Endothelial cell of umbilical vein (primary cell): ENCODE measurements at regions of chr3 and their contacts with region 1.

Region 1: GRCh38 chr3:147030274-147030673 is 376.1 kb downstream of the ZIC4 start:
- DNase-seq: no peak
- H3K4me3 ChIP-seq: no peak overlapping the region
- H3K27ac ChIP-seq: no peak overlapping the region
- H3K4me1 ChIP-seq: no peaks in the 10 kb centered on the region
- H3K27me3 ChIP-seq: no peaks in the 10 kb centered on the region
- CTCF ChIP-seq: no peak
- POLR2A ChIP-seq: no peak

Region 2: GRCh38 chr3:147327849-147328248 is 297.6 kb after region 1 on chr3:
- CTCF ChIA-PET with region 1: no interaction called
- POLR2A ChIA-PET with region 1: interaction called, 15 read pairs
- dilution Hi-C with region 1: no loop called
- intact Hi-C with region 1: no loop called
- DNase-seq: no peak
- H3K4me3 ChIP-seq: no peak overlapping the region
- H3K27ac ChIP-seq: no peak overlapping the region
- H3K4me1 ChIP-seq: peaks cover 8% of the 10 kb centered on the region
- H3K27me3 ChIP-seq: no peaks in the 10 kb centered on the region
- CTCF ChIP-seq: no peak
- POLR2A ChIP-seq: no peak